T-cell (primary cell): ENCODE measurements at regions of chr10 and their contacts with region 1.

Region 1: DNA sequence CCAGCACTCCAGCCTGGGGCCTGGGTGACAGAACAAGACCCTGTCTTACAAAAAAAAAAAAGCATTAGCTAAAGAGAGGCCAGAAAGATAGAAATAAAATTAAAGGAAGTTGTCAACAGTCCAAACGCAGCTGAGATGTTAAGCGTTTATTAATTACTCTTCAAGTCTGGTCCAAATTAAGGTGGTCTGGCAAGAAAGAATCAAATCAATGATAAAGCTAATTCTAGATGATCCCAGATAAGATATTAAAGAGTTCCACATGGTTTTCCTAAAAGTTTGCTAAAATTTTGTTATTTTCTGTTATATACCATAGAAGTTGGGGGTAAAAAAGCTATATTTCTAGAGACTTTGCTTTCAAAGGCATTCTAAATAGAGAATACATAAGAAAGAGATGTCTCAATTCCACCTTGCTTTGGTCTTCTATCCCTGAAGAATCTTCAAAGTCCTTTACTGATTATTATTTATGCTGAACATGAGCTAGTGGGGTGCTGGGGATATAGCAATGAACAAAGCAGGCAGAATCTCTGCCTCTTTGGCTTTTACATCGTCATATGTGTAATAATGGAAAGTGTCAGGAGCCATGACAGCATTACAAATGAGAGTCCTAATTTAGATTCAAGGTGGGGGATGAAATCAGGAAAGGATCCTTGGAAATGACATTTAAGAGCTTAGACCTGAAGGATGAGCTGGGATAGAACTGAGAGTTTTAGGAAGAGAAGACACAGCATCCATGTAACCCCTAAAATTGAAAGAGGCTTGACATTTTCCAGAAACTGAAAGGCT is 23.4 kb downstream of the FRA10AC1 start:
- DNase-seq: no peak
- ATAC-seq: no peak
- H3K4me3 ChIP-seq: no peak overlapping the region
- H3K4me3 Mint-ChIP-seq: no peak overlapping the region
- H3K27ac ChIP-seq: no peak overlapping the region
- H3K27ac Mint-ChIP-seq: no peak overlapping the region
- H3K4me1 ChIP-seq: no peaks in the 10 kb centered on the region
- H3K4me1 Mint-ChIP-seq: peaks cover 0 to 7% (median 0%) of the 10 kb centered on the region in 3 donors
- H3K27me3 ChIP-seq: no peaks in the 10 kb centered on the region
- H3K27me3 Mint-ChIP-seq: no peaks in the 10 kb centered on the region

Region 2: GRCh38 chr10:92999191-92999590 is 679.8 kb before region 1 on chr10:
- CTCF ChIA-PET with region 1: interaction called in 1 of 2 experiments, 10 read pairs
- POLR2A ChIA-PET with region 1: no interaction called
- DNase-seq: no peak
- ATAC-seq: no peak
- H3K4me3 ChIP-seq: no peak overlapping the region
- H3K4me3 Mint-ChIP-seq: no peak overlapping the region
- H3K27ac ChIP-seq: no peak overlapping the region
- H3K27ac Mint-ChIP-seq: no peak overlapping the region
- H3K4me1 ChIP-seq: no peaks in the 10 kb centered on the region
- H3K4me1 Mint-ChIP-seq: no peaks in the 10 kb centered on the region
- H3K27me3 ChIP-seq: no peaks in the 10 kb centered on the region
- H3K27me3 Mint-ChIP-seq: no peaks in the 10 kb centered on the region